Esophagus muscularis mucosa (tissue), 4 donors: ENCODE measurements at regions of chr19 and their contacts with region 1.

Region 1: GRCh38 chr19:34677386-34678084 is at the start of gene ZNF302:
- DNase-seq: peak; percentile 99
- H3K4me3 ChIP-seq: peak within 1 kb of the TSS; percentile 66 to 85 (median 80)
- H3K27ac ChIP-seq: peak within 1 kb of the TSS; percentile 92 to 97 (median 96)
- H3K4me1 ChIP-seq: peaks cover 23 to 32% (median 28%) of the 10 kb centered on the region in 4 donors
- H3K27me3 ChIP-seq: no peaks in the 10 kb centered on the region
- CTCF ChIP-seq: no peak
- EP300 ChIP-seq: peak; percentile 57
- POLR2A ChIP-seq: peak; percentile 45
- total RNA-seq, gene ZNF302: 20.4 to 29.5 (median 21.6) TPM

Region 2: DNA sequence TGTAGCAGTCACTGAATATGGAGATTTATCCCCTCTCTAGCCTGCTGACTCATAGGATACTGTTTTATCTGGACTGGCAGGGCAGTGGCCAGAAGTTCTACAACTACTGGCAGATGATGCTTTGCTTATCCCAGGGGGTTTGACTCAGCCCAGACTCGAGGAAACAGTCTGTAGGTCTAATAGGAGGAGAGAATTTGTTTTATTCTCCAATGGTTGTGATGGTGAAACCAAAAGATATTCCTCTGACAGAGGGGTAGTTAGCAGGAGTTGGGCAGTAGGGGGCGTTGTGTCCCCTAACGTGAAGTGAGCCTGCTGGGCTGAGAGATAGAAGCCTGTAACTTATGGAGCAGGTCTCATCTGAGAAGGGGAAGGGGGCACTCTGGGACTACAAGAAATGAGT is 121.0 kb before region 1 on chr19:
- intact Hi-C with region 1: no loop called
- DNase-seq: no peak
- H3K4me3 ChIP-seq: no peak overlapping the region
- H3K27ac ChIP-seq: no peak overlapping the region
- H3K4me1 ChIP-seq: no peaks in the 10 kb centered on the region
- H3K27me3 ChIP-seq: peaks cover 0 to 23% (median 0%) of the 10 kb centered on the region in 4 donors
- CTCF ChIP-seq: peak in 1 of 3 experiments; percentile 29
- EP300 ChIP-seq: no peak
- POLR2A ChIP-seq: no peak

Region 3: GRCh38 chr19:34733826-34734600 is 56.5 kb after region 1 on chr19 and contains the start of gene ZNF181:
- intact Hi-C with region 1: loop called (anchors 5 kb)
- DNase-seq: peak; percentile 98
- H3K4me3 ChIP-seq: peak within 1 kb of the TSS; percentile 70 to 97 (median 80)
- H3K27ac ChIP-seq: peak within 1 kb of the TSS; percentile 93 to 99 (median 96)
- H3K4me1 ChIP-seq: peaks cover 19 to 41% (median 35%) of the 10 kb centered on the region in 4 donors
- H3K27me3 ChIP-seq: no peaks in the 10 kb centered on the region
- CTCF ChIP-seq: no peak
- EP300 ChIP-seq: peak; percentile 61
- POLR2A ChIP-seq: peak; percentile 77
- total RNA-seq, gene ZNF181: 22.6 to 31.6 (median 26.0) TPM

Region 4: DNA sequence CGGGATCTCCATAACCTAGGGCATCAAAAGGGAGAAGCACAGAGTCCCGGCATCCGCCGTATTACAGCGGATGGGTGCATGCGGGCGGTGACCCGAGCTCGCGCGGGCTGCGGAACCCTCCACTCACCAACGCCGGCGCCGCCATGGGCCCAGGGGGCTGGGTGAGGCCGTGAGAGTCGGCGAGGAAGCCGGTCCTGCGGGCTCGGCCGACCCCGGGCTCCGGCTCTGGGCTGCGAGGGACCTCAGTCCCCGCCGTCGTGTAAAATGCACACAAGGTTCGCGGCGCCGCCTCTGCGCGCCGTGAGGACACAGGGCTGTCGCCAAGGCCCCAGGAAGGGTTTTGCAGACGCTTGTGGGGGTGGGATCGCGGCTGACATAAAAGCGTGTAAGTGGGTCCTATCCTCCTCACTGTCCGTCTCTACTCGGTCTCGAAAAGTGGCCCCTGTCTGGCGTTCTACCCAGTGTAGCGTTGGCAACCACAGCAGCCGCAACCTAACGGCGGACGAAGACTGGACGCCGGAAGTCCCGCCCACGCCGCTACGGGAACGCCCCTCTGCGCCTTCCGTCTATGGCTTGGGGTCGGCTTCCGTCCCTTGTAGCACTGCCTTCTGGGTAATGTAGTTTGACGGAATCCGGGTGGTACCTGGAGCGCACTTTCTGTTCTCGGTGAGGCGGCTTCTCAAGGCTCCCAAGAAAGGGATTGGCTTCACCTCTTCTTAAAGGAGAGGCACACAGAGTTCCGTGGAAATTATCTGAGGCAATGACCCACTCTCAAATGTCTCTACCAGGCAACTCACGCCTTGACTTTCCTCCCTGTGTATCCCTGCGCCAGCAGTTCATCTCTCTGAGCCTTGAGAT is 95.4 kb after region 1 on chr19 and contains the start of gene ZNF599:
- intact Hi-C with region 1: loop called (anchors 10 kb)
- DNase-seq: peak; percentile 98
- H3K4me3 ChIP-seq: peak within 1 kb of the TSS; percentile 73 to 96 (median 88)
- H3K27ac ChIP-seq: peak within 1 kb of the TSS; percentile 78 to 91 (median 84)
- H3K4me1 ChIP-seq: peaks cover 12 to 16% (median 14%) of the 10 kb centered on the region in 4 donors
- H3K27me3 ChIP-seq: no peaks in the 10 kb centered on the region
- CTCF ChIP-seq: no peak
- EP300 ChIP-seq: no peak
- POLR2A ChIP-seq: no peak
- total RNA-seq, gene ZNF599: 5.8 to 7.1 (median 6.7) TPM